Common myeloid progenitor, CD34-positive (primary cell): ENCODE measurements at regions of chr12 and their contacts with region 1.

Region 1: DNA sequence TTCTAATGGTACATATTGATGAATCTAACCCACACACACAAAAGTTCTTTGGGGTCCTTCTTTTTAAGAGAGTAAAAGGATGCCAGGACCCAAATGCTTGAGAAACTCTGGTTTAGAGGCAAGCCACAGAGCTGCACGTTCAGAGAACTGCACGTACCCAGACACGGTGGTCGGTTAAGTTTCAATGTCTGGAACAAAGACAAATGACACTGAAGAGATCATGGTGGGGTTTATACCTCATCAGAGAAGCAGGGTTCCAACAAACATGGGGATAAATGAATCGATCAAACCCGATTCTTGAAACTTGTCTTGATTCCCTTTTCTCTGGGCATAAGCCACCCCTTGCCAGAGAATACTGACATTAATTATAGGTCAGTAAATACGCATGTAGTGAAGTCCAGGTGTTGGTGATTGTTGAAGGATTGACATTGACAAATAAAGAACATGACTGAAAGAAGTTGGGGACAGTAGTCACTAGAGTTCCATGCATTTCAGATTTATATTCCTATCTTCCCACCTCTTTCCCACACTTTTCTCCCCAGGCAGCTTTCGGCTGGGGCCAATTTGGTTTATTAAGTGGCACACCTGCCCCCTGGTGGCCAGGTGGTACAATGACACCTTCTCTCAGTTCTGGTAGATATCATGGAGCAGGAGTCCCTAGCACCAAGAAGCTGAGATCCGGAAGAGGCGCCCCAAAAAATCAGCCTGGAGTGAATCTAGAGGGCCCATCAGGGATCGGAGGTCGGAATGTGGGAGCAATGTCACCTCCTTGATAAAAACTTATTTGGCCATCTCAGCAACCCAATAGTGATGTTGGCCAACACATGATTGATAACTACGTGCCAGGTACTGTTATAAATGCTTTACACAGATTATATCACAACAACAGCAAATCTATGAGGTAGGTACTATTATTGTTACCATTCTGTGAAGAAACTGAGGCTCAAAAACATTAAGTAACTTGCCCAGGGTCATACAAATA is 17.8 kb upstream of the HDAC7 start:
- DNase-seq: peak; percentile 65 to 75 (median 67)
- H3K4me3 ChIP-seq: no peak overlapping the region
- H3K27ac ChIP-seq: no peak overlapping the region
- H3K4me1 ChIP-seq: peaks cover 10 to 49% (median 44%) of the 10 kb centered on the region in 4 experiments
- H3K27me3 ChIP-seq: no peaks in the 10 kb centered on the region

Region 2: DNA sequence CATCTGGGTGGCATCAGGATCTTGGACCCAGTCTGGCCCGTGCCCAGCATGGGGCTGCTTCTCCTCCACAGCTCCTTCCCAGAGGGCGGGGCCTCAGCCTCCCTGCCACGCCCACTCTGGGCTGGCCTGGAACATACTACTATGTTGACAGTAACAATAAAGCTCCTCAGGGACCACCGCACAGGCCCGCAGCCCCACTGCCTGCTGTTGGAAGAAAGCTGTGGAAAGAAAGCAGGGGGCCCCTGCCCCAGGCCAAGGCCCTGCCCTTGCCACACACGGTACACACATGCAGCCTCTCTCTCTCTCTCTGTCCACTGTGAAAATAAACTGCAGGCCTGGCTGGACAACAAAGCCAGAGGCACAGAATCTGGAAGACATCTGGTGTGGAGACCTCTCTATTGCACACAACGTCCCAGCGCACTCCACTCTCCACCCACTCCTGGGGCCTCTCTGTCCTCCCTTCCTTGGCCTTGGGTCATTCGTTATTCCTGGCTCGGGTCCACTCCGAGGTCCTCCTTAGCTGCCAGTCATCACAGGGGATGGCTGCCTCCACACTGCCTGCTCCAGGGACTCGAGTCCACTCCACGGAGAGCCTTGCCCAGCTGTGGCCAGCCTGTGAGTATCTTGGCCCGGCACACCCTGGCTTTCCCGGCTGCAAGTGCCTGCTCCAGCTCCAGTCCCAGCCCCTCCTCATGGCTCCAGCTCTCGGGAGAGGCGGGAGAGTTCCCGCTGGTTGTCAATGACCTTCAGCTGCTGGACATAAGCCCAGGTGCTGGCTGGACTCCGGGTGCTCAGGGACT is 100.4 kb before region 1 on chr12:
- CTCF ChIA-PET with region 1: interaction called, 143 read pairs
- POLR2A ChIA-PET with region 1: interaction called, 3 read pairs
- DNase-seq: no peak
- H3K4me3 ChIP-seq: no peak overlapping the region
- H3K27ac ChIP-seq: no peak overlapping the region
- H3K4me1 ChIP-seq: peaks cover 4 to 25% (median 21%) of the 10 kb centered on the region in 4 experiments
- H3K27me3 ChIP-seq: no peaks in the 10 kb centered on the region

Region 3: GRCh38 chr12:47758834-47759690 is 78.4 kb before region 1 on chr12 and contains the start of gene RAPGEF3:
- CTCF ChIA-PET with region 1: interaction called, 17 read pairs
- POLR2A ChIA-PET with region 1: no interaction called
- DNase-seq: peak; percentile 79 to 84 (median 82)
- H3K4me3 ChIP-seq: peak within 1 kb of the TSS; percentile 25 to 90 (median 69)
- H3K27ac ChIP-seq: peak within 1 kb of the TSS; percentile 50 to 84
- H3K4me1 ChIP-seq: peaks cover 0 to 53% (median 36%) of the 10 kb centered on the region in 4 experiments
- H3K27me3 ChIP-seq: no peaks in the 10 kb centered on the region

Region 4: GRCh38 chr12:47779301-47779942 is 58.1 kb before region 1 on chr12:
- CTCF ChIA-PET with region 1: interaction called, 1,391 read pairs
- POLR2A ChIA-PET with region 1: no interaction called
- DNase-seq: peak; percentile 83 to 94 (median 90)
- H3K4me3 ChIP-seq: no peak overlapping the region
- H3K27ac ChIP-seq: no peak overlapping the region
- H3K4me1 ChIP-seq: peaks cover 9 to 59% (median 54%) of the 10 kb centered on the region in 4 experiments
- H3K27me3 ChIP-seq: no peaks in the 10 kb centered on the region

Region 5: DNA sequence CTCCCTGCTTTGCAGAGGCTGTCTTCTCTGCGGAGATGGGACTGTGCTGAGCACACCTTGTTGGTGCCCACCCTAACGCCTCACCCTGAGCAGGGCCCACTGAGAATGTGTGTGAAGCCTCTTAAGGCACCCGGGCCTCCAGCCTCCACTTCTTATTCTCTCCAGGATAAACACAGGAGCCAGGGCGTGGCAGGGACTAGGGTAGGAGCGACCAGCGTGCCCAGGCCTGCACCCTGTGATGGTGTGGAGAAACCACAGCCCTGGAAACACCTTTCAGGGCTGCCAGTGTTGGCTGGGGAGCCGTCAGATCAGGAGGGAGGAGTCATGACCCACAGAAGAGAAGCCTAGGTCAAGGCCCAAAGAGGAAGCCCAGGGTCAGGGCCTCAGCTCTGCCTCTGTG is 26.0 kb after region 1 on chr12:
- CTCF ChIA-PET with region 1: interaction called, 17 read pairs
- POLR2A ChIA-PET with region 1: no interaction called
- DNase-seq: no peak
- H3K4me3 ChIP-seq: no peak overlapping the region
- H3K27ac ChIP-seq: no peak overlapping the region
- H3K4me1 ChIP-seq: peaks cover 0 to 13% (median 10%) of the 10 kb centered on the region in 4 experiments
- H3K27me3 ChIP-seq: no peaks in the 10 kb centered on the region